HCT116 (cell line): ENCODE measurements at regions of chr11 and their contacts with region 1.

Region 1: DNA sequence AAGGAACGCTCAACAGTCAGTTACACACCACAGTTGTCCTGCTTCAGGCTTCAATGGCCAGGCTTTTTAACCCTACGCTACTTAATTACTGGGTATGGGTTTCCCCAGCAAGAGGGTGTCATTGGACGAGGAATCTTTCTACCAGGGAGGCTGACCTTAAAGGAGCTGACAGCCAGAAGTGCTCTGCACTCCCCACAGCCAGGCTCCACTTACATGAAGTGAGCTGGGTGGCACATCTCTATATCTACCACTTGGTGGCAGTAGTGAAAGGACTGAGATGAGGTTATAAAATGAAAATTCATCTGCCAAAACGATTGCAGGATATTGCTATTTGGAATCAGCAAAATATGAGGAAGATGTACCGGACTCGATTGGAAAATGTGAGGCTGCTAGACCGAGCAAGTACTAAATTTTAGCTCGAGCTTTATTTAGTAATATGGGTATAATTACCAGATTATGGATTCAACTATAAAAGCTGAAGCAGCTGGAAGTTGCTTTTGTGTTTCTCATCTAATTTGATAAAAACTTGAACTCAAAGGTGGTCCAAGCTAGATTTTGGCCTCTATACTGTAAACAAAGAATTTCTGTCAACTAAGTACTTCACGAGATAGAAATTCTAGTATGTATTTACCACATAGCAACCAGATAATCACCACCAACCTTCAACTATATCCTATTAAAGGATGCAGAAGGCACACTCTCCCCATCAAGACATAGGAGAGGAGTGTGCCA is 53.9 kb upstream of the CEP126 start:
- DNase-seq: peak; percentile 57
- ATAC-seq: peak; percentile 96
- H3K4me3 ChIP-seq: no peak overlapping the region
- H3K27ac ChIP-seq: no peak overlapping the region
- H3K4me1 ChIP-seq: peaks cover 0 to 38% of the 10 kb centered on the region in 2 experiments; a peak in 2 of 4 replicates
- H3K27me3 ChIP-seq: no peaks in the 10 kb centered on the region
- CTCF ChIP-seq: peak; percentile 78 to 81 (median 81)
- POLR2A ChIP-seq: no peak
- RAD21 ChIP-seq: peak; percentile 80

Region 2: GRCh38 chr11:101584655-101585054 is 276.2 kb before region 1 on chr11:
- CTCF ChIA-PET with region 1: no interaction called
- POLR2A ChIA-PET with region 1: no interaction called
- RAD21 ChIA-PET with region 1: no interaction called
- intact Hi-C with region 1: no loop called
- DNase-seq: no peak
- ATAC-seq: no peak
- H3K4me3 ChIP-seq: no peak overlapping the region
- H3K27ac ChIP-seq: no peak overlapping the region
- H3K4me1 ChIP-seq: no peaks in the 10 kb centered on the region
- H3K27me3 ChIP-seq: no peaks in the 10 kb centered on the region
- CTCF ChIP-seq: no peak
- POLR2A ChIP-seq: no peak
- RAD21 ChIP-seq: no peak

Region 3: GRCh38 chr11:101880222-101880621 is 19.4 kb after region 1 on chr11:
- CTCF ChIA-PET with region 1: interaction called, 18 read pairs
- POLR2A ChIA-PET with region 1: interaction called, 3 read pairs
- RAD21 ChIA-PET with region 1: no interaction called
- intact Hi-C with region 1: no loop called
- DNase-seq: peak; percentile 72
- ATAC-seq: peak; percentile 86
- H3K4me3 ChIP-seq: no peak overlapping the region
- H3K27ac ChIP-seq: no peak overlapping the region
- H3K4me1 ChIP-seq: 0 out of 4 replicates have a peak, but pooled peaks cover 0 to 6% of the 10 kb centered on the region in 2 experiments
- H3K27me3 ChIP-seq: no peaks in the 10 kb centered on the region
- CTCF ChIP-seq: peak; percentile 35 to 68 (median 50); a peak in 4 of 6 replicates
- POLR2A ChIP-seq: no peak
- RAD21 ChIP-seq: peak; percentile 46

Region 4: DNA sequence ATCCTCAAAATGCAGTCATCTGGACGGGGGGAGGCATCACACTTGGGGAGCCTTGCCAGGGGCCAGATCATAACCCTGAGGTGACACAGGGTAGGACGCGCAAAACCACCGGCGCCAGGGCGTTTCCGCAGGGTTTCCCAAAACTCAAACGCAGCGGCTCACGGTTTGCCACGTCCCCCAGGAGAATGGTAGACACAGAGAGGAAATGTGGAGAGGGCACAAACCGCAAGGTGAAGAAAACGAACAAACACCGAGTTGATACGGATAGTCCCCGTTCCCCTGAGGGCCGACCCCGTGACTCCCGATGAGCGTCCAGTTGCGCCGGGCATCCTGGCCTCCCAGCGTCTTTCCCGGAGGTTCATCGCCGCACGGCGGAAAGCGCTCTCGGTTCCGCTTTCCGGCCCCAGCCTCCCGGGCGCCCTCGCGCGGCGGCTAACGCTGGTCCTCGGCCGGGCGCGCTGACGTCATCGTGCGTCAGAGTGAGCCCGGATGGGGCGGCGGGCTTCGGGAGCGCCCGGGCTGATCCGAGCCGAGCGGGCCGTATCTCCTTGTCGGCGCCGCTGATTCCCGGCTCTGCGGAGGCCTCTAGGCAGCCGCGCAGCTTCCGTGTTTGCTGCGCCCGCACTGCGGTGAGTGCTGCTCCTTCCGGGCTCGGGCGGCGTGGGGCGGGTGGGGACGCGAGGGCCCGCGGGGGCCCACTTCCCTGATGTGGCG is 486.0 kb after region 1 on chr11 and contains the start of gene BIRC2:
- CTCF ChIA-PET with region 1: interaction called, 3 read pairs
- POLR2A ChIA-PET with region 1: no interaction called
- RAD21 ChIA-PET with region 1: no interaction called
- intact Hi-C with region 1: loop called (anchors 10 kb)
- DNase-seq: peak; percentile 78
- ATAC-seq: peak; percentile 91
- H3K4me3 ChIP-seq: peak within 1 kb of the TSS; percentile 75 to 80
- H3K27ac ChIP-seq: peak within 1 kb of the TSS; percentile 62
- H3K4me1 ChIP-seq: peaks cover 2 to 22% of the 10 kb centered on the region in 2 experiments; a peak in 3 of 4 replicates
- H3K27me3 ChIP-seq: no peaks in the 10 kb centered on the region
- CTCF ChIP-seq: peak; percentile 49 to 76 (median 53); a peak in 5 of 6 replicates
- POLR2A ChIP-seq: peak; percentile 63
- RAD21 ChIP-seq: peak; percentile 54
- total RNA-seq, gene BIRC2: 32.6 TPM

Region 5: GRCh38 chr11:103682318-103683184 is 1821.7 kb after region 1 on chr11:
- CTCF ChIA-PET with region 1: no interaction called
- POLR2A ChIA-PET with region 1: no interaction called
- RAD21 ChIA-PET with region 1: no interaction called
- intact Hi-C with region 1: no loop called
- DNase-seq: peak; percentile 61
- ATAC-seq: peak; percentile 93
- H3K4me3 ChIP-seq: no peak overlapping the region
- H3K27ac ChIP-seq: no peak overlapping the region
- H3K4me1 ChIP-seq: no peaks in the 10 kb centered on the region
- H3K27me3 ChIP-seq: no peaks in the 10 kb centered on the region
- CTCF ChIP-seq: peak; percentile 49 to 88 (median 79); a peak in 5 of 6 replicates
- POLR2A ChIP-seq: no peak
- RAD21 ChIP-seq: peak; percentile 86